Calu3 (cell line): ENCODE measurements at regions of chr3 and their contacts with region 1.

Region 1: DNA sequence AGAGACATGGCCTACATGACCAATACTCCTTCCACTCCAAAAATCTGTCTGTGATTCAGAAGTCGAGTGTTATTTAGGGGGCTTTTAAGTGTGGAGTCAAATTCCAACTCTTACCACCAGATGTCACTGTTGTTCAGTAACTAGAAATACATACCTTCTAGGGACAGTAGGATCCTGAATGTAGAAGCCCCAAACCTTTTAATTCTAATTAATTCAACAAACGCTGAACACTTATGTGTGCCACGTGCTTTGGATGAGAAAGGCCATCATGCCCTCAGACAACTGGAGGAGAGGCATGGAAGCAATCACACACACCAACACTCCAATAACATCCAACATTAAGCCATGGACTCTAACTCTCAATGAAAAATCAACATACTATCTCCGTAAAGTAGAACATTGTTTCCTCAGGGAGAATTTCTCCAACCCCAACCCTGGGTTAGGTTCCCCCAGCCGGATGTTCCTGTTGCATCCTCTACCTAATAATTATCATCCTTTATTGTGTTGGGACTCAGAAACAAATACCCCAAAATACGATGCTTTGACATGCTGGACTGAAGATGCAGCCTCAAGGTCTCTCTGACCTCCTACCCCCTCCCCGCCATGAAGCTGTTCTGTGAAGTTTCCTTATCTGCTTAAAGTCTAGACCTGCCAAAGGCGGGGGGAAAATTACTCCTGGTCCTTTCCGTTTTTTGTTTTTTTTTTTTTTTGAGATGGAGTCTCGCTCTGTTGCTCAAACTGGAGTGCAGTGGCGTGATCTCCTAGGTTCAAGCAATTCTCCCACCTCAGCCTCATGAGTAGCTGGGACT is 8.0 kb upstream of the CCDC13 start:
- DNase-seq: peak; percentile 36
- H3K4me3 Mint-ChIP-seq: no peak overlapping the region
- H3K27ac Mint-ChIP-seq: no peak overlapping the region
- H3K4me1 Mint-ChIP-seq: peaks cover 14% of the 10 kb centered on the region
- H3K27me3 Mint-ChIP-seq: no peaks in the 10 kb centered on the region
- CTCF ChIP-seq: peak; percentile 64

Region 2: DNA sequence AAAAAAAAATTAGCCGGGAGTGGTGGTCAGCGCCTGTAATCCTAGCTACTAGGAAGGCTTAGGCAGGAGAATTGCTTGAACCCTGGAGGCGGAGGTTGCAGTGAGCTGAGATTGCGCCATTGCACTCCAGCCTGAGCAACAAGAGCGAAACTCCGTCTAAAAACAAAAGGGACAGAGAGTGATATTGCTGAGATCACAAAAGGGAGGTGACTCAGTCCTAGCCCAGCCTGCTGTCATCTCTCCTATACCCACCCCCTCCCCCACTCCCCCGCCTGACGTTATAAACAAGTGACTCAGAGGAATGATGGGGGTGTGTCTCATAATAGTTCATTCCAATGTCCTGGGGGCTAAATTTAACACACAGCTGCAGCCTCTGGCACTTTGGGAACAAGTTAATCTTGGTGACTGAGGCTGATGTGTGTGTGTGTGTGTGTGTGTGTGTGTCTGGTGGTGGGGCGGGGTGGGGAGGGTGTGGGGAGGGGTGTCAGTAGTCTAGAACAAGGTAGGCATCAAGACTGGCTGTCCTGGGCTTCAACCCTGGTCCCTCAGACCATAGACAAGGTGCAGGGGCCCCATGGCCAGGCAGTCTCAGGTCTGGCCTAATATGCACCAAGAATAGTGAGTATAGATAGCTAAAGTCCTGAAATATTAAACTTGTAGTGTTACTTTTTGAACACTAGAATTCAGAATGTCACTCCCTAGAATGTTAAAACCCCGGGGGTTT is 97.1 kb before region 1 on chr3:
- CTCF ChIA-PET with region 1: no interaction called
- intact Hi-C with region 1: no loop called
- DNase-seq: peak; percentile 56
- H3K4me3 Mint-ChIP-seq: no peak overlapping the region
- H3K27ac Mint-ChIP-seq: no peak overlapping the region
- H3K4me1 Mint-ChIP-seq: peaks cover 6% of the 10 kb centered on the region
- H3K27me3 Mint-ChIP-seq: peaks cover 4% of the 10 kb centered on the region
- CTCF ChIP-seq: no peak

Region 3: DNA sequence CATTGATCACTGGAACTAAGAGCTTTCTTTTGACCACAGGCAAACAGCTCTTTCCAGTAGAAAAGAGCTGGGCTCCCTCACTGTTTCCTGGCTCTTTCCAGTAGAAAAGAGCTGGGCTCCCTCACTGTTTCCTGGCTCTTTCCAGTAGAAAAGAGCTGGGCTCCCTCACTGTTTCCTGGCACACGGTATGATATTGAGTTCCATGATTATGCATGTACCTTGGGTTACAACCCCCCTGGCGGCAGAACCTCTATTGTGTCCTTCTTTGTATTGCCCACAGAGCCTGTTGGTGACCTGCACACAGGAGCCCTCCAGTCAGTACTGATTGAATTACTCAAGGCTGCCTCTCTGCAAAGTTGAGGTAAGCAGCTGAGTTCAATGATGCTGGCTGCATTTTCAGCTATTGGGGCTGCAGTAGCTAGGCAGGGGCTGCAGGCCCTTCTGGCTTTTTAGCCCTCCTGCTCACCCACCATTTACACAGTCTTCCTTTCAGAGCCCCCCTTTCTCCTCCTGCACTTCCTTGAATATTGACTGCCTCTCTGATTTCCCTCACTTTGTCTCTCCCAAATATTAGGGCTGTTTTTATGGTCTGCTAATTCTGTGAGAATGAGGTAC is 38.4 kb after region 1 on chr3:
- CTCF ChIA-PET with region 1: interaction called, 10 read pairs
- intact Hi-C with region 1: no loop called
- DNase-seq: peak; percentile 46
- H3K4me3 Mint-ChIP-seq: no peak overlapping the region
- H3K27ac Mint-ChIP-seq: peak overlapping the region; percentile 71
- H3K4me1 Mint-ChIP-seq: peaks cover 28% of the 10 kb centered on the region
- H3K27me3 Mint-ChIP-seq: no peaks in the 10 kb centered on the region
- CTCF ChIP-seq: no peak

Region 4: GRCh38 chr3:42831321-42831713 is 50.2 kb after region 1 on chr3:
- CTCF ChIA-PET with region 1: interaction called, 20 read pairs
- intact Hi-C with region 1: loop called (anchors 2 kb)
- DNase-seq: peak; percentile 78
- H3K4me3 Mint-ChIP-seq: no peak overlapping the region
- H3K27ac Mint-ChIP-seq: no peak overlapping the region
- H3K4me1 Mint-ChIP-seq: peaks cover 44% of the 10 kb centered on the region
- H3K27me3 Mint-ChIP-seq: no peaks in the 10 kb centered on the region
- CTCF ChIP-seq: peak; percentile 48

Region 5: DNA sequence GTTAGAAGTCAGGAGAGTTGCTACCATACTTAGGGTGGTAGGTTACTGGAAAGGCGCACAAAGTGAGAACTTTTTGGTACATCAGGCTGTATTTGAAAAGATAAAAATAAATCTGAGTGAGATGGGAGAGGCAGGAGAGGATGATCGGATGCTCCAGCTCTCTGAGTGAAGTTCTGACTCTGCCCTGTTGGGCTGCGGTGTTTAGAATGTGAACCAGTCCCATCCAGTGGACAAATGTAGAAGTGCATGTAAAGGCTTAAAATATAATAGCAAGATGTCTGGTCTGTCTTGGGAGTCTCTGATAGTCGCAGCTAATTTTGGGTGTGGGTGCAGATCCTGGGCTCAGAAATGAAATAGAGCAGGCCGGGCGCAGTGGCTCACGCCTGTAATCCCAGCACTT is 58.5 kb after region 1 on chr3:
- CTCF ChIA-PET with region 1: interaction called, 3 read pairs
- intact Hi-C with region 1: loop called (anchors 2 kb)
- DNase-seq: peak; percentile 53
- H3K4me3 Mint-ChIP-seq: no peak overlapping the region
- H3K27ac Mint-ChIP-seq: no peak overlapping the region
- H3K4me1 Mint-ChIP-seq: no peaks in the 10 kb centered on the region
- H3K27me3 Mint-ChIP-seq: no peaks in the 10 kb centered on the region
- CTCF ChIP-seq: peak; percentile 40

Region 6: DNA sequence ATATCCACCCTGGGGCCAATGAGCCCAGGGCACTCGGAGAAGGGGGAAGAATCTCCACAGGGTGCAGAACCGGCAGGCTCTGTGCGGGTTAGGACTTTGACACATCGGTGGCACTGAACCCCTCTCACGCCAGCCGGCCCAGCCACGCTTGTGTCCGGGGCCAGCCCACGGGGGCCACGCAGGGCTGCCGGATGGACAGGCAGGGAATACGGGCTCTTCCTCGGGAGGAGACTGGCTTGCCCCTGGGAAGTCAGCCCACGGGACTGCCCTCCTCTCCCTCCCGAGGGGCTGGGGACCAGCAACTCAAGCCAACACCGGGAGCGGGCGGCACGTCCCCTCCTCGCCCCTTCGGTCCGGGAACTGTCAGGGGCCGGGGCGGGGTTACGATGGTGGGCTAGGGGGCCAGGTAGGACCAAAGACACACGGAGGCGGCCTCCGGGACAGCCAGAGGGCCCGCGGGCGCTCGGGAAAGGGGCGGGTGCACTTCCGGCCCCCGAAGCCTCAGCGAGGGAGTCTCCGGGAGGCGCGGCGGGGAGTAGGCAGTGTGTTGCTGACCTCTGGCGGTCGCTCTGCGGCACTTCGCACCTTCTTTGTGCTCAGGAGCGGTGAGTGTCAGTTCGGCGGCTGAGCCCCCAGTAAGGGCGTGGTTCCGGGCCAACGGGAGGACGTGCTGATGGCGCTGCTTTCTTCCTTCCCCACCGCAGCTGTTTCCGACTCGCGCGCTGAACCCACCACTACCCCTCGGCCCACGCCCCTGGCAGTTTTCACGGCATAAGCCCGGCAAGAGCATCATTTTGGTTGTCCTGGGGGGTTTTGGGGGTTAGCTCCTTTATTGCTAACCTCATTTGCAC is 99.7 kb after region 1 on chr3:
- CTCF ChIA-PET with region 1: interaction called, 4 read pairs
- intact Hi-C with region 1: loop called (anchors 2 kb)
- DNase-seq: peak; percentile 86
- H3K4me3 Mint-ChIP-seq: peak overlapping the region; percentile 83
- H3K27ac Mint-ChIP-seq: peak overlapping the region; percentile 49
- H3K4me1 Mint-ChIP-seq: peaks cover 23% of the 10 kb centered on the region
- H3K27me3 Mint-ChIP-seq: peaks cover 37% of the 10 kb centered on the region
- CTCF ChIP-seq: peak; percentile 79